ENCODE measurements at regions of chr17 and their contacts with region 1.

Region 1: GRCh38 chr17:21252796-21253645 is at the start of gene NATD1:
- DNase-seq: no peak
- H3K4me3 ChIP-seq: peak within 1 kb of the TSS; percentile 59
- CTCF ChIP-seq: no peak

Region 2: DNA sequence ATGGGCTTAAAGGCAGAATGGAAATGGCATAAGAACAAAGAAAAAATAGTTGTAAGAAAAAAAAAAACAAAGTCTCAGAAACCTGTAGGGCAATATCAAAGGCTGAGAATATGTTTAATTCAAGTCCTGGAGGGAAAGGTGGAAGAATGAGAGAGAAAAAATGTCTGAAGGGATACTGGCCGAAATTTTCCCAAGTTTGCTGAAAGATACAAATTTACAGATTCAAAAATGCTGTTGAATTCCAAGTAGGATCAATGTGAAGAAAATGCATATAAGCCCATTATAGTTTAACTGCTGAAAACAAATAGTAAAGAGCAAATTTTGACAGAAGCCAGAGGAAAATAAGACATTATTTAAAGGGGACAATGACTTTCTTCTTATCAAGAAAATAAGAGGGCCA is 203.6 kb before region 1 on chr17:
- CTCF ChIA-PET with region 1: no interaction called
- POLR2A ChIA-PET with region 1: no interaction called
- DNase-seq: no peak
- H3K4me3 ChIP-seq: no peak overlapping the region
- CTCF ChIP-seq: no peak

Region 3: GRCh38 chr17:21239680-21240368 is 13.2 kb before region 1 on chr17:
- CTCF ChIA-PET with region 1: interaction called, 30 read pairs
- POLR2A ChIA-PET with region 1: no interaction called
- DNase-seq: no peak
- H3K4me3 ChIP-seq: no peak overlapping the region
- CTCF ChIP-seq: peak; percentile 42

Measured in AG04449 (cell line).